Endothelial cell of umbilical vein (primary cell): ENCODE measurements at regions of chr17 and their contacts with region 1.

Region 1: DNA sequence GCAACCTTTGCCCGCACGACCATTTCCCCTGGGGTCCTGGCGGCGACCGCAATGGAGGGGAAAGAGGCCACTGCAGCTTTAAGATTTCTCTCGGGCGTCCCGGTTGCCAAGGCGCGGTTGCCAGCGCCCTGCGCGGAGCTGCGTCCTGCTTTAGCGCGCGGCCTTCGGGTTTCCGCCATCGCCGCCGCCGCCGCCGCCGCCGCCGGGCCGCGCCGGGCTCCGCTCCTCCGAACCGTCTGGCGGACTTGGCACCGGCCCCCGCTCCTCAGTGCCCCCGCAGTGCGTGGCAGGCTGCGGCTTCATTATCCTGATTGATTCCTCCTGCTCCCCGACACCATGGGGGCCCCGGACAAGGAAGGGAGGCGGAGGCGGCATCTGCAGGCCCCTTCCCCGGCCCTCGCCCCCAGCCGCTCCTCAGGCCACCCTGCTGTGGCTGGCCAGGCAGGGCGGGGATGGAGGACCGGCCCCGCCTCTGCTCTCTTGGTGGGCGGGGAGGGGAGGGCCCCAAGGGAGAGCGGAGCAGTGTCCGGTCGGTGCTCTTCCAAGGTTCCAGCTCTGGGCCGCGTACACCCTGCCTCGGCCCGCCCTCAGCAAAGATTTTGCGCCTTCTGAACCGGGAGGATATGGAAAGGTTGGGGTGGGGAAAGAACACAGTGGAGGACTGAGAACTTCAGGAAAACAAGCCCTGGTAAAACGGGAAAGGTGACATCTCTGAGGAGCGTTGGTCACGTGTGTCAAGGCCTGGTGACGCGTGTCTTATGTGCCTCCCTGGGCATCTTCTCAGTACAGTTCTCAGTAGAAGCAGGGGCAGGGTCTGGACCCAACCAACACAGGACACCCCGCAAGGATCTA is 34.0 kb downstream of the NEUROD2 start:
- DNase-seq: peak; percentile 77
- H3K4me3 ChIP-seq: peak overlapping the region; percentile 9 to 67 (median 35)
- H3K27ac ChIP-seq: no peak overlapping the region
- H3K4me1 ChIP-seq: peaks cover 5% of the 10 kb centered on the region
- H3K27me3 ChIP-seq: peaks cover 0 to 2% of the 10 kb centered on the region in 2 experiments
- CTCF ChIP-seq: no peak
- POLR2A ChIP-seq: peak; percentile 59

Region 2: DNA sequence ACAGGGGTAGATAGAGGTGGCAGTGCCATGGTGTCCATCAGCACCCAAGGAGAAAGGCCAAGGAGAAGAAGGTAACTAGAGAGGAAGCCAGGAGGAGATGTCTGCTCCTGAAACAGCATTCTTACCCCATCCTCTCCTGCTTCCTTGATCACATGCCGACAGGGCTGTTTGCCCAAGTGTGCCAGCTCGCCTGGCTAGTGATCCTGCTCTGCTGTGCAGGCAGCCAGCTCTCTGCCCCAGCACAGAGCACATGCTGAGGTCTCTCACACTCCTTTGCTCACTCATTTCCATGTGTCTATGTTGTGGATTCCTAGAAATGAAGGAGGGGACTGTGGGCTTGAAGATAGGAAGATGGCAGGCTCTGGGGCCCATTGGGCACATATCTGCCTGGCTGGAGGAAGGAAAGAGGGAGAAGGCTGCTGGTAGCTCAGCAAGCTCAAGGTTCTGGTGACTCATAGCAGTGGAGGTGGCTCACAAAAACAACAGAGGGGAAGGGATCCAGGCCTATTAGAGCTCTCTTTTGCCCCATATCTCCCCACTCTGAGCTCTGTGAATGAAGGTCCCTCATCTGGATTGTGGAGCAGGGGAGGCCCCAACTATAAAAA is 20.2 kb before region 1 on chr17:
- CTCF ChIA-PET with region 1: interaction called, 29 read pairs
- POLR2A ChIA-PET with region 1: no interaction called
- dilution Hi-C with region 1: no loop called
- intact Hi-C with region 1: loop called (anchors 2 kb)
- DNase-seq: peak; percentile 32
- H3K4me3 ChIP-seq: no peak overlapping the region
- H3K27ac ChIP-seq: no peak overlapping the region
- H3K4me1 ChIP-seq: peaks cover 8% of the 10 kb centered on the region
- H3K27me3 ChIP-seq: no peaks in the 10 kb centered on the region
- CTCF ChIP-seq: no peak
- POLR2A ChIP-seq: no peak

Region 3: GRCh38 chr17:39563476-39563875 is 10.2 kb before region 1 on chr17:
- CTCF ChIA-PET with region 1: interaction called, 11 read pairs
- POLR2A ChIA-PET with region 1: no interaction called
- dilution Hi-C with region 1: no loop called
- intact Hi-C with region 1: no loop called
- DNase-seq: peak; percentile 14
- H3K4me3 ChIP-seq: no peak overlapping the region
- H3K27ac ChIP-seq: no peak overlapping the region
- H3K4me1 ChIP-seq: no peaks in the 10 kb centered on the region
- H3K27me3 ChIP-seq: no peaks in the 10 kb centered on the region
- CTCF ChIP-seq: no peak
- POLR2A ChIP-seq: no peak